ENCODE measurements at regions of chr18 and their contacts with region 1.

Region 1: GRCh38 chr18:49250816-49251388 is 209.5 kb downstream of the DYM start:
- DNase-seq: peak; percentile 23
- ATAC-seq: peak; percentile 67
- H3K4me3 ChIP-seq: no peak overlapping the region
- H3K27ac ChIP-seq: no peak overlapping the region
- H3K4me1 ChIP-seq: peaks cover 44% of the 10 kb centered on the region
- H3K27me3 ChIP-seq: no peaks in the 10 kb centered on the region
- CTCF ChIP-seq: peak; percentile 60
- EP300 ChIP-seq: no peak
- POLR2A ChIP-seq: no peak
- RAD21 ChIP-seq: peak; percentile 58; the same call in 1 of the 2 replicates

Region 2: DNA sequence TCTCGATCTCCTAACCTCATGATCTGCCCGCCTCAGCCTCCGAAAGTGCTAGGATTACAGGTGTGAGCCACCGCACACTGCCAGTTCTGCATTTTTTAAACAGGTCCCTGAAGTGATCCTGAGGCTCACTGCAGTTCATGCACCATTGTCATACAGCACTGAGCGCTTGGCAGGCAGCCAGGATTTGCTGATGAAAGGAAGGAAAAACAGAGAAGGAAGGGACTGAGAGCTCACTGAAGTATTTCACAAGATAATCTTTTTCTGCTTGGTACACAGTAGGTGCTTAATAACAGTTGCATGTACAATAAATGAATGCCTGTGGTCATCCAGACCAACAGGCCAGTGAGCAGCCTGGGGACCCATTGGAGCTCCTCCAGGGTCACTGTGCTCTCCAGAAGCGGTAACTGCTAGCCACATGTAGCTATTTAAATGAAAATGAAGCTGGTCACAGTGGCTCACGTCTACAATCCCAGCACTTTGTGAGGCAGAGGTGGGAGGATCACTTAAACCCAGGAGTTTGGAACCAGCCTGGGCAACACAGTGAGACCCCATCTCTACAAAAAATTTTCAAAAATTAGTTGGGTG is 267.0 kb before region 1 on chr18:
- CTCF ChIA-PET with region 1: no interaction called
- POLR2A ChIA-PET with region 1: no interaction called
- in situ Hi-C with region 1: no loop called
- intact Hi-C with region 1: no loop called
- DNase-seq: peak; percentile 63
- ATAC-seq: no peak
- H3K4me3 ChIP-seq: no peak overlapping the region
- H3K27ac ChIP-seq: no peak overlapping the region
- H3K4me1 ChIP-seq: peaks cover 73% of the 10 kb centered on the region
- H3K27me3 ChIP-seq: no peaks in the 10 kb centered on the region
- CTCF ChIP-seq: no peak
- EP300 ChIP-seq: no peak
- POLR2A ChIP-seq: no peak
- RAD21 ChIP-seq: no peak

Region 3: GRCh38 chr18:49412679-49413078 is 161.8 kb after region 1 on chr18:
- CTCF ChIA-PET with region 1: no interaction called
- POLR2A ChIA-PET with region 1: no interaction called
- in situ Hi-C with region 1: no loop called
- intact Hi-C with region 1: loop called (anchors 2 kb)
- DNase-seq: no peak
- ATAC-seq: no peak
- H3K4me3 ChIP-seq: no peak overlapping the region
- H3K27ac ChIP-seq: no peak overlapping the region
- H3K4me1 ChIP-seq: no peaks in the 10 kb centered on the region
- H3K27me3 ChIP-seq: no peaks in the 10 kb centered on the region
- CTCF ChIP-seq: no peak
- EP300 ChIP-seq: no peak
- POLR2A ChIP-seq: no peak
- RAD21 ChIP-seq: no peak

Region 4: GRCh38 chr18:49447810-49448745 is 197.2 kb after region 1 on chr18:
- CTCF ChIA-PET with region 1: no interaction called
- POLR2A ChIA-PET with region 1: no interaction called
- in situ Hi-C with region 1: loop called (anchors 25 kb)
- intact Hi-C with region 1: loop called (anchors 5 kb)
- DNase-seq: peak; percentile 76
- ATAC-seq: peak; percentile 98
- H3K4me3 ChIP-seq: no peak overlapping the region
- H3K27ac ChIP-seq: no peak overlapping the region
- H3K4me1 ChIP-seq: peaks cover 13% of the 10 kb centered on the region; the same call in 1 of the 2 replicates
- H3K27me3 ChIP-seq: no peaks in the 10 kb centered on the region
- CTCF ChIP-seq: peak; percentile 85
- EP300 ChIP-seq: no peak
- POLR2A ChIP-seq: no peak
- RAD21 ChIP-seq: peak; percentile 67

Measured in HepG2 (cell line).